HEK293 (cell line): ENCODE measurements at regions of chr3 and their contacts with region 1.

Region 1: GRCh38 chr3:15601397-15602145 is at the starts of genes BTD and HACL1:
- H3K4me3 ChIP-seq: peak within 1 kb of the TSS; percentile 56
- H3K27ac ChIP-seq: peak within 1 kb of the TSS; percentile 53
- H3K4me1 ChIP-seq: no peaks in the 10 kb centered on the region
- CTCF ChIP-seq: peak; percentile 86

Region 2: DNA sequence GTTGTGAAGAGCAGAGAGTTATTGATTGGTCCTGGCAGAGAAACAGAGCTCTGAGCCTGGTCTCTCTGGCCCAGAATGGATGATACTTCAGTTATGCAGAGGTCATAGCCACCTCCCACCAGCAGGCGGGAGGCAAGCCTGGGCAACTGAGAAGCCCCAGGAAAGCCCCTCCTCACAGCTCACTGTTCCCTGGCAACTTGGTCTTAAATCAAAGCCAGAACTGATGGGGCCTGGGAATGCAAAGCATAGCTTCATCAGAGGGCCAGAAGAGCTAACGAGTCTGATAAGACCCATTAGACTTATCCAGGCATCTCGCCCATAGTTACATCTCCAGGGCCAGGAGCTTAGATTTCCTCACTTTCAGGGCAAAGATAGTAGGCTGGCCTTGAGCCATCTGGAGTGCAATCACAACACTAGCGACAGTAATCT is 74.5 kb before region 1 on chr3:
- CTCF ChIA-PET with region 1: no interaction called
- POLR2A ChIA-PET with region 1: no interaction called
- H3K4me3 ChIP-seq: no peak overlapping the region
- H3K27ac ChIP-seq: no peak overlapping the region
- H3K4me1 ChIP-seq: no peaks in the 10 kb centered on the region
- CTCF ChIP-seq: no peak

Region 3: DNA sequence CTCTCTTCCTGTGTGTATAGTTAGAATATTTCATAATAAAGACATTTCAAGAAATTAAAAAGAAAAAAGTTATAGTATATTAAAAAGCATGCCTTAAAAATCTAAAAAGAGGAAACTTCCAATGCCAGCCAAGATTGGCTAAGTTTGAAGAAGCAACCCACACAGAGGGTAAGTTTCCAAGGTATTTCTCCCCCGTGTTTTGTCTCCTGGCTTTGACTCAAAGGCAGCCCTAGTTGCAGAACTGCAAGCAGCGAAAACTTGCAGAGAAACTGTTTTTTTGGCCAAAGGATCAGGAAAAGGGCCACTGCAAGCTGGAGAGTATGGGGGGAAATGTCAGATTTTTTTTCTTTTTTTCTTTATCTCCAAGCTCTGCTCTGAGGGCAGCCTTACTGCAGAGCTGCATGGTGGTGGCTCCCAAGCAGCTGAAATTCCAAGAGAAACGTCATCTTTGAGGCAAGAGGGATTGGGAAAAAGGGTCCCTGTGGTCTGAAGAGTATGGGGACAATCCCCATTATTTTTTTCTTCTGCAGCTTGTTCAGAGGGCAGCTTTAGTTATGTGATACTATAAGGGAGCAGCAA is 23.2 kb before region 1 on chr3:
- CTCF ChIA-PET with region 1: no interaction called
- POLR2A ChIA-PET with region 1: no interaction called
- H3K4me3 ChIP-seq: no peak overlapping the region
- H3K27ac ChIP-seq: no peak overlapping the region
- H3K4me1 ChIP-seq: no peaks in the 10 kb centered on the region
- CTCF ChIP-seq: no peak

Region 4: DNA sequence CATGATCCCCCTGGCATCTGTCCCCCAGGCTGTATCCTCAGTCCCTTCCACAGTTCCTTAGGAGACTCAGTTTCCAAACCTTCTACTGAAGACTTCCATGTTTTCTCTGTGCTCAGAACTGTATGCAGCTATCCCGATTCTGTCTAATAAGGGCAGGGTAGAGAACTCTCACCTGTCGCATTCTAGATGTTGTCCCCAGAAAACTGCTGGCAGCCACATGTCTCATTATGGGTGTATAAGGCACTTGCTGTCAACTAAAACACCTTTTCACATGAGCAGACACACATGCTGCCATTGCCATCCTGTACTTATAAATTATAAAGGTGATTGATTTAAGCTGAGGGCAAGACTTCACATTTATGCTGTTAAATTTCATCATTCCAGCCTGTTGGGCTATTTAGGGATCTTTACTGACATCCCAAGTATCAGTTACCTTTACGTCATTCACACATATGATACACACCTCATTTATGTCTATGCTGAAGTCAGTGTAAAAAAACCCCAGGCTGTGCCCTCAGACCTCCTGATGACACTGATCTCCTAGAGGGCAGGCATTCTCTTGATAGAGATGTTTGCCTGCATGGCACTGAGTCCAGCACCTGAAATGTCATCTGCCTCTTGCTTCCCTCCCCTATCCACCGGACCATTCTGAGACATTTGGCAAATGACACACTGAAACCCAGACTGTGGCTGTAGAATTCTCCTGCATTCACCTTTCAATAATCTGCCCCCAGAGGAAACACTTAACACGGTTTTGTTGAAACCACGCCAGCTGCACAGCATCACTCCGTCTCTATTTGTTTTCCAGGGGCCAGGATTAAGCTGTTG is 35.8 kb after region 1 on chr3:
- CTCF ChIA-PET with region 1: no interaction called
- POLR2A ChIA-PET with region 1: interaction called, 11 read pairs
- H3K4me3 ChIP-seq: no peak overlapping the region
- H3K27ac ChIP-seq: no peak overlapping the region
- H3K4me1 ChIP-seq: peaks cover 29% of the 10 kb centered on the region
- CTCF ChIP-seq: no peak

Region 5: GRCh38 chr3:15713364-15713763 is 111.8 kb after region 1 on chr3:
- CTCF ChIA-PET with region 1: no interaction called
- POLR2A ChIA-PET with region 1: no interaction called
- H3K4me3 ChIP-seq: no peak overlapping the region
- H3K27ac ChIP-seq: no peak overlapping the region
- H3K4me1 ChIP-seq: peaks cover 7% of the 10 kb centered on the region; the same call in 1 of the 2 replicates
- CTCF ChIP-seq: no peak

Region 6: DNA sequence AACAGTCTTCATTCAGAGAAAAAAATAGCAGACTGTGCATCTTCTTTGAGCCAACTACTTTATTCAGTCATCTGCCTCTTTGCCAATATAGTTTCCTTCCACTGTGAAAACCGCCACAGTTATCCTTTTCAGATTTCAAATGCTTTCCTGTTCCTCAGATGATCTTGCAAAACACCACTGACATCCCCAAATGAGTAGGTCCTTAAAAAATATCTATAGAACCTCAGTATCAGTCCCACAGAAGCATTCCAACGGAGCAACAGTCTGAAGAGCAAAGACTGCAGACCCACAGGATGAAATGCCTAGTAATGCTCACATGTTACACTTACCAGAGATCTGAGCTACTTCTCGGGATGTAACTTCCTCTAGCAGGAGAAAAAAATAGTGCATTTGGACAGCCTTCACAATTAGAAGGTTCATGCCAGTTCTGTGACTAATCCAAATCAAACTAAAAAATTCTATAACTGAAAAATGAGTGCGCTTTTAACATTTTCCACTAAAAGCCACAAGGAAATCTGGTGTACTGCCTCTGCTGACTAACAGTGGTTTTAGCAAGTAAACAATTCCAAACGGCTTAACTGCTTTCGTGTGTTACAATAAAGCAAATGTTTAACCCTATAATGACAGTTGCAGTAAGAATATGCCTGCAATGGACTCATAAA is 196.2 kb after region 1 on chr3 and contains the start of gene ANKRD28:
- CTCF ChIA-PET with region 1: no interaction called
- POLR2A ChIA-PET with region 1: interaction called, 17 read pairs
- H3K4me3 ChIP-seq: peak within 1 kb of the TSS; percentile 0
- H3K27ac ChIP-seq: peak within 1 kb of the TSS; percentile 35
- H3K4me1 ChIP-seq: peaks cover 35% of the 10 kb centered on the region
- CTCF ChIP-seq: no peak